Calu3 (cell line): ENCODE measurements at regions of chr2 and their contacts with region 1.

Region 1: DNA sequence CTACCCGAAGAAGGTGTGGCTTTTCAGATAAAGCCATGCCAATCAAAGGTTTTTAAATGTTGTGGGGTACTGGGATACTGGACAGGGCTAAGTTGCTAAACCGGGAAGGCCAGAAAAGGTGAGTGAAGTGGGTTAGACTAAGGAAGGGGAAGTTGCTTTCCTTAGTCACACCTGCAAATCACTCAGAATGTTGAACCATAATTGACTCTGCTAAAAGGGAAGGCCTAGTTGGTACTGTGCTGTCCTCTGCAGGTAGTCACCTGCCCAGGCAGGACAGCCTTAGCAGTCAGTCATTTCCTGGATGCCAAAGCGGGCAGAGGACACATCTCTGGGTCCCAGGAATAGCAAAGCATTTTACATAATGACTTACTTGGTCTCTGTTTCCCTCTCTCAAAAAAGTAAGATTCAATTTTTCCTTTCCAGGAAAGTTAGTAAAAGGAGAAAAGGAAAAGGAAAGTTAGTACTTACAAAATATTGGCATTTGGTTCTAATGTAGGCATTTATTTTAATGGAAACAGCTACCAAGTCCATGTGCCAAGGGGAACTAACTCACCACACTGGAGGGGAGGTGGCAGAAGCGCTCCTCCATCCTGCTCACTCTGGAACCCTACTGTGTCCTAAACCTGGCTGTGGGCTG is 60.3 kb downstream of the RFTN2 start:
- DNase-seq: peak; percentile 62
- H3K4me3 Mint-ChIP-seq: no peak overlapping the region
- H3K27ac Mint-ChIP-seq: peak overlapping the region; percentile 69
- H3K4me1 Mint-ChIP-seq: peaks cover 22% of the 10 kb centered on the region
- H3K27me3 Mint-ChIP-seq: no peaks in the 10 kb centered on the region
- CTCF ChIP-seq: no peak

Region 2: GRCh38 chr2:197515739-197516392 is 99.3 kb before region 1 on chr2 and contains the start of gene MOB4:
- CTCF ChIA-PET with region 1: no interaction called
- intact Hi-C with region 1: loop called (anchors 10 kb)
- DNase-seq: peak; percentile 97
- H3K4me3 Mint-ChIP-seq: peak within 1 kb of the TSS; percentile 97
- H3K27ac Mint-ChIP-seq: peak within 1 kb of the TSS; percentile 96
- H3K4me1 Mint-ChIP-seq: peaks cover 11% of the 10 kb centered on the region
- H3K27me3 Mint-ChIP-seq: no peaks in the 10 kb centered on the region
- CTCF ChIP-seq: no peak
- total RNA-seq, gene MOB4: 28.3 TPM in 2 replicates